Caco-2 (cell line): ENCODE measurements at regions of chr15 and their contacts with region 1.

Region 1: GRCh38 chr15:62847900-62848489 is 194.6 kb upstream of the TPM1 start:
- DNase-seq: peak; percentile 57 to 58
- H3K4me3 ChIP-seq: no peak overlapping the region
- H3K4me3 Mint-ChIP-seq: no peak overlapping the region
- H3K27ac Mint-ChIP-seq: peak overlapping the region; percentile 81
- H3K4me1 ChIP-seq: peaks cover 59% of the 10 kb centered on the region
- H3K4me1 Mint-ChIP-seq: peaks cover 52% of the 10 kb centered on the region
- H3K27me3 ChIP-seq: no peaks in the 10 kb centered on the region
- H3K27me3 Mint-ChIP-seq: no peaks in the 10 kb centered on the region
- CTCF ChIP-seq: peak; percentile 42 to 49

Region 2: GRCh38 chr15:61796056-61796455 is 1051.9 kb before region 1 on chr15:
- CTCF ChIA-PET with region 1: no interaction called
- POLR2A ChIA-PET with region 1: no interaction called
- intact Hi-C with region 1: no loop called
- DNase-seq: no peak
- H3K4me3 ChIP-seq: no peak overlapping the region
- H3K4me3 Mint-ChIP-seq: no peak overlapping the region
- H3K27ac Mint-ChIP-seq: no peak overlapping the region
- H3K4me1 ChIP-seq: no peaks in the 10 kb centered on the region
- H3K4me1 Mint-ChIP-seq: no peaks in the 10 kb centered on the region
- H3K27me3 ChIP-seq: no peaks in the 10 kb centered on the region
- H3K27me3 Mint-ChIP-seq: peaks cover 9% of the 10 kb centered on the region
- CTCF ChIP-seq: no peak

Region 3: DNA sequence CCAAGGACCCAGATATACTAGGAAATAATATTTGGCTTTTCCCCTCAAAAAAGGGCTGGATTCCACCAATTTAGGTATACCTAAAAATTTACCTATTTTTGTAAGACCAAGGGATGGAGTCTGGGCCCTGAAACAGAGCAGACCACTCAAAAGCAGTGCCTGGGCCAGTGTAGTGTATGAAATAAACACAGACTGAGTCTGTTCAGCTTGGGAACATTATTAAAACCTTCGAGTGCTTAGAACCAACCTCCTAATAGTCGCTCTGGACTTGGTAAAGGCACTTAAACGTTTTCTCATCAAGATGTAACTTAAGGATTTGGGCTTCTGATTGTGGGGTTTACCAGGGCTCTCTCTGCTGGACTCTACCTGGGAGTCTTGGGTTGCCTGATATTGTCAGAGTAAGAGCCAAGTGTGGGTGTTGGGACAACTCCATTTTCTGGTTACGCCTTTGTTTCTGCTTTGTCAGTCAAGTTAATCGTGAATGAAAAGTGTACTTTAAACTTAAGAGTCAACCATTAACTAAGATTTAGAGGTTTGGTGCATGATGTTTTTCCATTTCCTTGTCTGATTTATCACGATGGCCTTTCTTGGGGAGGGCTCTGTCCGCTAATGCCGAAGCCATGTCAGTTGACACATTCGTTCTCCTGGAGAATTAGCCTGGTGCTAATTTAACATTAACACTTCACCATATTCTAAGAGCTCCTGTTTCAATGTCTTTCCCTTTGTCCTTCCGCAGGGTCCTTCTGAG is 26.4 kb before region 1 on chr15:
- CTCF ChIA-PET with region 1: no interaction called
- POLR2A ChIA-PET with region 1: no interaction called
- intact Hi-C with region 1: loop called (anchors 2 kb)
- DNase-seq: peak in 1 of 2 experiments; percentile 32
- H3K4me3 ChIP-seq: no peak overlapping the region
- H3K4me3 Mint-ChIP-seq: no peak overlapping the region
- H3K27ac Mint-ChIP-seq: peak overlapping the region; percentile 77
- H3K4me1 ChIP-seq: peaks cover 32% of the 10 kb centered on the region
- H3K4me1 Mint-ChIP-seq: peaks cover 26% of the 10 kb centered on the region
- H3K27me3 ChIP-seq: no peaks in the 10 kb centered on the region
- H3K27me3 Mint-ChIP-seq: no peaks in the 10 kb centered on the region
- CTCF ChIP-seq: no peak

Region 4: GRCh38 chr15:62896978-62897647 is 49.1 kb after region 1 on chr15:
- CTCF ChIA-PET with region 1: interaction called, 8 read pairs
- POLR2A ChIA-PET with region 1: interaction called, 3 read pairs
- intact Hi-C with region 1: loop called (anchors 1 kb)
- DNase-seq: peak; percentile 81 to 90
- H3K4me3 ChIP-seq: 0 out of 2 replicates have a peak overlapping the region, but pooled peaks have one; percentile 1
- H3K4me3 Mint-ChIP-seq: peak overlapping the region; percentile 55
- H3K27ac Mint-ChIP-seq: peak overlapping the region; percentile 53
- H3K4me1 ChIP-seq: peaks cover 48% of the 10 kb centered on the region
- H3K4me1 Mint-ChIP-seq: peaks cover 41% of the 10 kb centered on the region
- H3K27me3 ChIP-seq: no peaks in the 10 kb centered on the region
- H3K27me3 Mint-ChIP-seq: no peaks in the 10 kb centered on the region
- CTCF ChIP-seq: no peak

Region 5: DNA sequence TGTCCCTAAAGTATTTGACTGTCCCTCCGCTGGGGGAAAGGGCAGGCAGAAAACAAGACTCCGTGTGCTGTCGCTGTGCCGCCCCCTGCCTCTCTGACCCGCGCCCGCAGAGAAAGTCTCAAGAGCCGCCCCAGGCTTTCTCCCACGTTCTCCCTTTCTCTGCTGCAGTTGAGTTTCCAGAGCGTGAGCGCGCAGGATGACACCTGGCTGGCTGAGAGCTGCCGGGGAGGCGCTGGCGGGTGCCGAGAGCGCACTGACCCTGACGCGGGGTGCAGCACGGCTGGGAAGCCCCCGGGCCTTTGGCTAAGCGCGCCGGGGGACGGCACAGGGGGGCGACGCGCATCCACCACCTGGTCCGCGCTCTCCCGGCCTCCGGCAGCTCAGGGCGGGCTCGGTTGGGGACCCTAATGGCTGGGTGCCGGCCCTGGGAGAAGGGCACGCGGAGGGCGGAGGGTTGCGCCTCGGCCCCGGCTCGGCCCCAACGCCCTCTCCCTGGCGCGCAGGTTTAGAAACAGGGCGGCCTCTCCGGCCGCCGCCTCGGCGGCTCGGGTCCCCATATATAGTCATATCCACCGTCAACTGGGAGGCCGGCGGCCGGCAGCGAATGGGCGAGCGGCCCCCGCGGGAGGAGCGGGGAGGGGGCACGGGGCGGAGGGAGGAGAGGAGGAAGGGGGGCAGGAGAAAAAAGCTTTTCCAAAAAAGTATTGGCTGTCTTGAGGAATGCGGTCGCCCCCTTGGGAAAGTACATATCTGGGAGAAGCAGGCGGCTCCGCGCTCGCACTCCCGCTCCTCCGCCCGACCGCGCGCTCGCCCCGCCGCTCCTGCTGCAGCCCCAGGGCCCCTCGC is 194.2 kb after region 1 on chr15 and contains the start of gene TPM1:
- CTCF ChIA-PET with region 1: no interaction called
- POLR2A ChIA-PET with region 1: interaction called, 4 read pairs
- intact Hi-C with region 1: loop called (anchors 2 kb)
- DNase-seq: peak; percentile 91 to 93
- H3K4me3 ChIP-seq: peak within 1 kb of the TSS; percentile 73
- H3K4me3 Mint-ChIP-seq: peak within 1 kb of the TSS; percentile 80
- H3K27ac Mint-ChIP-seq: peak within 1 kb of the TSS; percentile 96
- H3K4me1 ChIP-seq: peaks cover 60% of the 10 kb centered on the region
- H3K4me1 Mint-ChIP-seq: peaks cover 41% of the 10 kb centered on the region
- H3K27me3 ChIP-seq: no peaks in the 10 kb centered on the region
- H3K27me3 Mint-ChIP-seq: no peaks in the 10 kb centered on the region
- CTCF ChIP-seq: peak in 1 of 2 experiments; percentile 43
- total RNA-seq, gene TPM1: 193 and 209 TPM in 2 replicates

Region 6: GRCh38 chr15:63093486-63094205 is 245.7 kb after region 1 on chr15:
- CTCF ChIA-PET with region 1: no interaction called
- POLR2A ChIA-PET with region 1: interaction called, 4 read pairs
- intact Hi-C with region 1: loop called (anchors 10 kb)
- DNase-seq: peak; percentile 86 to 88
- H3K4me3 ChIP-seq: no peak overlapping the region
- H3K4me3 Mint-ChIP-seq: no peak overlapping the region
- H3K27ac Mint-ChIP-seq: no peak overlapping the region
- H3K4me1 ChIP-seq: peaks cover 6% of the 10 kb centered on the region
- H3K4me1 Mint-ChIP-seq: peaks cover 15% of the 10 kb centered on the region
- H3K27me3 ChIP-seq: no peaks in the 10 kb centered on the region
- H3K27me3 Mint-ChIP-seq: no peaks in the 10 kb centered on the region
- CTCF ChIP-seq: peak; percentile 77 to 82